Activated B cell treated with CpG ODN at 0.5 μM for 24 hours (primary cell): ENCODE measurements at regions of chr10 and their contacts with region 1.

Region 1: GRCh38 chr10:17607603-17608332 is 9.4 kb downstream of the HACD1 start:
- DNase-seq: no peak
- ATAC-seq: peak; percentile 78
- H3K4me3 Mint-ChIP-seq: no peak overlapping the region
- H3K27ac Mint-ChIP-seq: no peak overlapping the region
- H3K4me1 Mint-ChIP-seq: peaks cover 2% of the 10 kb centered on the region
- H3K27me3 Mint-ChIP-seq: no peaks in the 10 kb centered on the region
- CTCF ChIP-seq: peak; percentile 53

Region 2: GRCh38 chr10:16843252-16843870 is 764.4 kb before region 1 on chr10:
- CTCF ChIA-PET with region 1: no interaction called
- POLR2A ChIA-PET with region 1: no interaction called
- intact Hi-C with region 1: loop called (anchors 5 kb)
- DNase-seq: no peak
- ATAC-seq: peak; percentile 37
- H3K4me3 Mint-ChIP-seq: no peak overlapping the region
- H3K27ac Mint-ChIP-seq: no peak overlapping the region
- H3K4me1 Mint-ChIP-seq: no peaks in the 10 kb centered on the region
- H3K27me3 Mint-ChIP-seq: no peaks in the 10 kb centered on the region
- CTCF ChIP-seq: peak; percentile 35

Region 3: DNA sequence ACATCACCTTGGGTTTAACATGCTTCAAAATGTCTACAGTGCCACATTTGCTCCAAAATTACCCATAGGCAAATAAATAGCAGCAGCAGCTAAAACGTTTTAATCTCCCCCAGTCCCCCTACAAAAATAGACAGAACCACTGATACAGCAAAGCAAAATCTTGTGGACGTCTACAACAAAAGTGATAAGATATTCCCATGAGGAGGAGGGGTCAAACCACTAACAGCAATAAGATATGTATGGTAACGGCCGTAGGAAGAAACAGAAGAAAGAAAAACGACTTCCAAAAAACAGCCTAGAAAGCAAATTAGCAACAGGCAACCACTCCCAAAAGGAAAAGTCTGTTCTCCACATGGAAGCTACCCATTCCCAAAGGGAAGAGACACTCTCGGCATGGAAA is 118.9 kb before region 1 on chr10:
- CTCF ChIA-PET with region 1: no interaction called
- POLR2A ChIA-PET with region 1: no interaction called
- intact Hi-C with region 1: no loop called
- DNase-seq: no peak
- ATAC-seq: no peak
- H3K4me3 Mint-ChIP-seq: no peak overlapping the region
- H3K27ac Mint-ChIP-seq: no peak overlapping the region
- H3K4me1 Mint-ChIP-seq: no peaks in the 10 kb centered on the region
- H3K27me3 Mint-ChIP-seq: no peaks in the 10 kb centered on the region
- CTCF ChIP-seq: no peak

Region 4: DNA sequence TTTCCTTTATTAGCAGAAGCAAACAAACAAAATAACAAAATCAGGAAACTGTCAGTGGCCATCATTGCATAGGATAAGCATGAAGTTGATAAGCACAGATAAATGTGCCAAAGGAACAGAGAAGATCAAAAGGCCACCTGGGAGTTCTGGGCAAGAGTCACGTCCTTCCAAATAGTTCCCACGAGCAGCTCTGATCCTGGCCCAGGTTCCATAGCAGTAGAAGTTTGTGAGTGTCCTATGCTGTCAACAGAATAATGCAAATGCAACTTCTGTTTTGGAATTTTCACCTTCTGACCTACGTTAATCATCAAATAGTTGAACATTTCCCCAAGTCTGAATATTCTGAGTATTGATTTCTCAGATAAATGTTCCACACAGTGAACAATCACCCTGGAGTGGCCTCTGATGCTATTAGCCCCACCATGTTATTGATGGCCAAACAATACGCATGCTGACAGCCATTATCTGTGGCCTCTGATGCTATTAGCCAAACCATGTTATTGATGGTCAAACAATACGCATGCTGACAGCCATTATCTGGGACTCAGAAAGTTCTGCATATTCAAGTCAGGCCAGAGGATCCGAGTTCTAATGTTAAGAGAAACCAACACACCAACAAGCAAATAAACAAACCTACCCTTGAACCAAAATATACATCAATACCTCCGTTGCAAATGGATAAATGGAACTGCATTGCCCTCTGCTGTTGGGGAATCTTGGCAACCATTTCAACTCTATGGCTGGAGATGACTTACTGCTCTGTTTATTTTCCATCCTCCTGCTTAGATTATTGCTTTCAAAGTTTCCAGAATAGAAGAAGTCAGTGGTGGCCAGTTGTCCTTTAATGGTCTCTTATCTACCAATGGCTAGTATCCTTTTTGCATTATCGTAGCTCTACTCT is 264.7 kb after region 1 on chr10:
- CTCF ChIA-PET with region 1: interaction called, 3 read pairs
- POLR2A ChIA-PET with region 1: no interaction called
- intact Hi-C with region 1: loop called (anchors 1 kb)
- DNase-seq: no peak
- ATAC-seq: no peak
- H3K4me3 Mint-ChIP-seq: no peak overlapping the region
- H3K27ac Mint-ChIP-seq: no peak overlapping the region
- H3K4me1 Mint-ChIP-seq: no peaks in the 10 kb centered on the region
- H3K27me3 Mint-ChIP-seq: peaks cover 3% of the 10 kb centered on the region
- CTCF ChIP-seq: no peak

Region 5: DNA sequence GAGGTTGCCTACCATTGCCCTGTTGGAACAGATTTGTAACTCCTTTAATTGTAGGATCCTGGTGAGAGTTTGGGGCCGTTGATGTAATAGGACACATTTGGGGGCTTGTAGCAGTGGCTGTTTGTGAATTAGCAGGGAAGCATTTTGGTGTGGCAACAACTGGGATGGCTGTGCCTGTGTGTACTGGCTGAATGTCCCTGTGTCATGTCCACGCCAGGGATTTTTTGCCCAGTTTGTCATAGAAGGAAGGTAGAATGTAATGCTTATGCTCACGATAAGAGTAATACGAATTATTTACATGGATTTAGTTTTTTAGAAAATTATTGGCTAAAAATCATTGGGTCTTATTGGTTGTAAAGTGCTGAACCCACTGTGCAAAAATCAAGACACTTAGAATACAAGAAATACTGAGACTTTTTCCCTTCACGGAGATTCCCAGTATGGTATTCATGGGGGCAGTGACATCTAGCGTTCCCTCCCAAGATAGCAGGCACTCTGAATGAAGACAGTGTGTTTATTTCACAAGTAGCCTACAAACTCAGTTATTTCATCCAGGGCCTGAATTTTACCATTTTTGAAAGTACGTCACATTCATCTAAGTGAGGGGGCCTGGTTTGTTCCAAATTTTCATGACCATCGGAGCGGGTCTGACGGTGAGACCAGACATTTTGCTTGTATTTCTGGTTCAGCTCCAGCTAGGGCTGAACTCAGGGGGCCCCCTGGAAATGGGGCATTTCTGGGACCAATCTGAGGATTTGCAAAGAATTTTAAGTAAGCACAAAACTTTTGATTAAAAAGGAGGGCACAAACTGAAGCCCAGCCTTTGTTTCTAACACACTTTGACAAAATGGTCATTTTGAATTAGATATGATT is 607.2 kb after region 1 on chr10:
- CTCF ChIA-PET with region 1: no interaction called
- POLR2A ChIA-PET with region 1: no interaction called
- intact Hi-C with region 1: loop called (anchors 2 kb)
- DNase-seq: no peak
- ATAC-seq: no peak
- H3K4me3 Mint-ChIP-seq: no peak overlapping the region
- H3K27ac Mint-ChIP-seq: no peak overlapping the region
- H3K4me1 Mint-ChIP-seq: no peaks in the 10 kb centered on the region
- H3K27me3 Mint-ChIP-seq: no peaks in the 10 kb centered on the region
- CTCF ChIP-seq: no peak

Region 6: GRCh38 chr10:18312374-18313139 is 704.8 kb after region 1 on chr10:
- CTCF ChIA-PET with region 1: no interaction called
- POLR2A ChIA-PET with region 1: no interaction called
- intact Hi-C with region 1: loop called (anchors 2 kb)
- DNase-seq: no peak
- ATAC-seq: peak; percentile 50
- H3K4me3 Mint-ChIP-seq: no peak overlapping the region
- H3K27ac Mint-ChIP-seq: no peak overlapping the region
- H3K4me1 Mint-ChIP-seq: no peaks in the 10 kb centered on the region
- H3K27me3 Mint-ChIP-seq: peaks cover 3% of the 10 kb centered on the region
- CTCF ChIP-seq: no peak